Mammary epithelial cell (primary cell): ENCODE measurements at regions of chrX and their contacts with region 1.

Region 1: GRCh38 chrX:10902001-10902400 is 209.1 kb upstream of the HCCS start:
- DNase-seq: peak; percentile 48
- H3K4me3 ChIP-seq: no peak overlapping the region
- H3K27ac ChIP-seq: no peak overlapping the region
- H3K4me1 ChIP-seq: no peaks in the 10 kb centered on the region
- H3K27me3 ChIP-seq: no peaks in the 10 kb centered on the region
- CTCF ChIP-seq: no peak

Region 2: DNA sequence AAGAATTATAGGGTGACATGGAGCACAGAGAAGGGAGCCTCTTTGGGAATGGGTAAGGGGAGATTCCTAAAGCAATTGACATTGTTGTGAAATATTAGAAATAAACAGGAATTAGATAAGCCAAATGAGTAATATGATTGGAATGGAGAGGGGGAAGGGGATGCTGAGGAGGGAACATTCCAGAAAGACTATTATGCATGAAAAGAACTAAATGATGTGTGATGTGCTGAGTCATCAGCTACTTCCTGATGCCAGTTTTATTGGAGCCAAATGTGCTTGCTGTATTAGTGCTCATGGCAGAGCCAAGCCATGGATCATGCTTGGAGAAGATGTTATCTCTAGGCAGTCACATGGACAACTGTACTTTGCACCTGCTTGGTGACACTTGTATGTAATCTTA is 20.2 kb after region 1 on chrX:
- CTCF ChIA-PET with region 1: no interaction called
- dilution Hi-C with region 1: no loop called
- in situ Hi-C with region 1: no loop called
- intact Hi-C with region 1: loop called (anchors 2 kb)
- DNase-seq: peak; percentile 62
- H3K4me3 ChIP-seq: no peak overlapping the region
- H3K27ac ChIP-seq: no peak overlapping the region
- H3K4me1 ChIP-seq: peaks cover 6% of the 10 kb centered on the region
- H3K27me3 ChIP-seq: no peaks in the 10 kb centered on the region
- CTCF ChIP-seq: no peak